HCT116 (cell line): ENCODE measurements at regions of chr1 and their contacts with region 1.

Region 1: DNA sequence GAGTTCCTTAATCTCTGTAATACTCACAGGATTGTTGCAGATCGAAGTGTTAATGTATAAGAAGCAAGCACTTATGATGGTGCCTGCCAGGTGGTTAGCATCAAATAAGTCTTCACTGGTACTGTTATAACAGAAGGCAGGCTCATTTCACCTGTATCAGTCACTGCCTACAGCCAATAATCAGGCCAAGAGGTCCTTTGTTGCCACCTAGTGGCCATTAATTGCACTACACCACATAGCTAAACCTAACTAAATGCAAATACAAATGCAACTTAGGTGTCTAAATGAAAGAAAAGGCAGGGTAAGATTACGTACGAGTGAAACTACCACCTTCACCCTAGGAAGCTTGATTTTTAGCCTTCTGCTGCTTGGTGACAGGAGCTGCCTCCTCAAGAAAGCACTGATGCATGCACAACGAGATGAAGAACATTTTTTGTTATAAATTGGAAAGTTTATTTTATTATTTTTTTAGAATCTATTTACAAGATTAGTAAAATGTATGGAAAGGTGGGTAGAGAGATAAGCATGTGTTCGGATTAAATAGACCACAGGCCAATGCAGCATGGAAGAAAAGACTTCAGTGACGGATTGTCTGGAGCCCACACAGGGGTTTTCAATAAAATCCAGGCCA is 334.8 kb upstream of the CAMK1G start:
- DNase-seq: peak; percentile 59
- ATAC-seq: peak; percentile 89
- H3K4me3 ChIP-seq: no peak overlapping the region
- H3K27ac ChIP-seq: no peak overlapping the region
- H3K4me1 ChIP-seq: no peaks in the 10 kb centered on the region
- H3K27me3 ChIP-seq: no peaks in the 10 kb centered on the region
- CTCF ChIP-seq: peak; percentile 71 to 90 (median 83)
- POLR2A ChIP-seq: no peak
- RAD21 ChIP-seq: peak; percentile 78

Region 2: GRCh38 chr1:209354111-209354839 is 105.5 kb after region 1 on chr1:
- CTCF ChIA-PET with region 1: interaction called, 3 read pairs
- POLR2A ChIA-PET with region 1: no interaction called
- RAD21 ChIA-PET with region 1: no interaction called
- intact Hi-C with region 1: loop called (anchors 5 kb)
- DNase-seq: peak; percentile 85
- ATAC-seq: peak; percentile 99
- H3K4me3 ChIP-seq: no peak overlapping the region
- H3K27ac ChIP-seq: no peak overlapping the region
- H3K4me1 ChIP-seq: no peaks in the 10 kb centered on the region
- H3K27me3 ChIP-seq: 0 out of 2 replicates have a peak, but pooled peaks cover 5% of the 10 kb centered on the region
- CTCF ChIP-seq: peak; percentile 76 to 94 (median 89)
- POLR2A ChIP-seq: no peak
- RAD21 ChIP-seq: peak; percentile 85

Region 3: DNA sequence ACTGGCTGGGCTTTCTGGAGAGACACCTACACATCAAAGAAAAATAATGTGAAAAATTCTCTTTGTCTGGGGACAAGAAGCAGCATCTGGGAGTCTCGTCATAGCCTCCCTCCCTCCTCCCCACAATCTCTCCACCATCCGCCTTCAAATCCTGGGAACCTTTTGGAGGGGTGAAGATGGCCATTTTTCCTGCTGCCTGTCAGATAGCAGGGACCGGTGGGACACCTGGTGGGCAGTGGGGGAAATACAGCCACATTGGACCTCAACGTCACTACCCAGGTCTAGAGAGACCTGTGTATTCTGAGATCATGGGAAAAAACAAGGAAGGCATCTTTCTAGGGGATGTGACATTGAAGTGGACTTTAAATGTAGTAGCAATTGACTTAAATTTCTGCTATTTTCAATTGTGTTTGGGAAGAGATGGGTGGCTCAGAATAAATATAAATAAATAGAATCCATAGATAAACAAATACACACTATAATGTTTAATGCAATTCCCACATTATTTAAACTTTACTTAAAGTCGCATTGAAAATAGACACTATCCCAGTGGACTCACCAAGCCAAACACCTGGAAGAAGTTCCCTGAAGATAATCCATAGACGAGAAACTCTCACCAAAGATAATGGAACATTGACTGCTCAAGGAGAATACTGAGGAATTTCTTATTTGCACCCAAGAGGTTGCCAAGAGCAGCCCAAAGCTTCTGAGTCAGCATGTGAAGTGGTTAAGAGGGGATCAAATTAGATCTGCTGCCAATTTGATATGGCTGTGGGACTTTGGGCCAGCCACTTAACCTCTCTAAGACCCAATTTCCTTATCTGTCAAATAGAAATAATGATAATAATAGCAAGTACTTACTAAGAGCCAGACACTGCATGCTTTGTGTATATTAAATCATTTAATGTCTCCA is 187.1 kb after region 1 on chr1:
- CTCF ChIA-PET with region 1: interaction called, 4 read pairs
- POLR2A ChIA-PET with region 1: no interaction called
- RAD21 ChIA-PET with region 1: no interaction called
- intact Hi-C with region 1: loop called (anchors 5 kb)
- DNase-seq: peak; percentile 69
- ATAC-seq: peak; percentile 99
- H3K4me3 ChIP-seq: no peak overlapping the region
- H3K27ac ChIP-seq: no peak overlapping the region
- H3K4me1 ChIP-seq: no peaks in the 10 kb centered on the region
- H3K27me3 ChIP-seq: no peaks in the 10 kb centered on the region
- CTCF ChIP-seq: peak; percentile 76 to 91 (median 88)
- POLR2A ChIP-seq: no peak
- RAD21 ChIP-seq: peak; percentile 96